Endothelial cell of umbilical vein (primary cell): ENCODE measurements at regions of chr1 and their contacts with region 1.

Region 1: GRCh38 chr1:43991476-43992231 is at the start of gene CCDC24:
- DNase-seq: peak; percentile 59
- H3K4me3 ChIP-seq: peak within 1 kb of the TSS; percentile 39 to 55 (median 49)
- H3K27ac ChIP-seq: no peak within 1 kb of the TSS
- H3K4me1 ChIP-seq: peaks cover 7% of the 10 kb centered on the region
- H3K27me3 ChIP-seq: no peaks in the 10 kb centered on the region
- CTCF ChIP-seq: no peak
- POLR2A ChIP-seq: peak; percentile 41
- total RNA-seq, gene CCDC24: 2.2 and 2.8 TPM in 2 replicates

Region 2: GRCh38 chr1:43835082-43836021 is 156.3 kb before region 1 on chr1:
- CTCF ChIA-PET with region 1: no interaction called
- POLR2A ChIA-PET with region 1: no interaction called
- dilution Hi-C with region 1: no loop called
- intact Hi-C with region 1: no loop called
- DNase-seq: peak; percentile 10
- H3K4me3 ChIP-seq: no peak overlapping the region
- H3K27ac ChIP-seq: no peak overlapping the region
- H3K4me1 ChIP-seq: peaks cover 11% of the 10 kb centered on the region
- H3K27me3 ChIP-seq: no peaks in the 10 kb centered on the region
- CTCF ChIP-seq: no peak
- POLR2A ChIP-seq: no peak

Region 3: DNA sequence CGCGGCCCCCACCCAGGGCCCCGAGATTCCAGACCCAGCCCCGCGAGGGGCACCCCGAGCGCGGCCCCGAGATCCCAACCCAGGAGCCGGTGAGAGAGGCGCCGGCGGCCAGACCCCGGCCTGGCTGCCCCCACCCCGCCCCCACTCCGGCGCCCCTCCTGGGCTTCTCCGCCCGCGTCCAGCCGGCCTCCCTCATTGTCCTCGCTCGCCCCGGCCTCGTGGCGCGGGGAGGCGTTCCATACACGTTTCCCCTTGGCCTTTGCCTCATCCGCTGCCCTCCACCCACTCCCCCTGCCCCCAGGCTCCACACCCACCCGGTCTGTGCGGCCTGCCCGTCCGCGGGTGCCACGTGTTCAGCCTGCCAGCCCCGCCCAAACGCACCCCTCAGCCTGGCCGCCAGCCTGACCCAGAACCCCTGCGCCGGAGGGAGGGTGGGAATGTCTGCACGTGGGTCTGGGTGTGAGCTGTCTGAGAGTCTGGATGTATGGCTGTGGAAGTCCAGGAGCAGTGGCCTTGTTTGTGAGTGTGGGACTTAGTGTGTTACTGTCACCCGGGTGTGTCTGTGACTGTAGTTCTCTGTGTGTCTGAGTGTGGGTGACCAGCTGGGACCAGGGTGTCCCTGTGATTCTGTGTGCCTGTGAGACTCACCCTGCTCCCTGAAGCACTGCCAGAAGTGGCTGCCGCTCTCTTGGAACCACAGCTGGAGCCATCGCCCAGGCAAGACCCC is 12.0 kb before region 1 on chr1:
- CTCF ChIA-PET with region 1: interaction called, 4 read pairs
- POLR2A ChIA-PET with region 1: no interaction called
- dilution Hi-C with region 1: no loop called
- intact Hi-C with region 1: loop called (anchors 1 kb)
- DNase-seq: peak; percentile 47
- H3K4me3 ChIP-seq: peak overlapping the region; percentile 46 to 66 (median 50)
- H3K27ac ChIP-seq: peak overlapping the region; percentile 13
- H3K4me1 ChIP-seq: peaks cover 27% of the 10 kb centered on the region
- H3K27me3 ChIP-seq: no peaks in the 10 kb centered on the region
- CTCF ChIP-seq: no peak
- POLR2A ChIP-seq: no peak